PC-3 (cell line): ENCODE measurements at regions of chr10 and their contacts with region 1.

Region 1: GRCh38 chr10:57579926-57580325 is 687.8 kb downstream of the IPMK start:
- DNase-seq: peak; percentile 78
- ATAC-seq: peak; percentile 98
- H3K4me3 ChIP-seq: no peak overlapping the region
- H3K27ac ChIP-seq: no peak overlapping the region
- H3K4me1 ChIP-seq: no peaks in the 10 kb centered on the region
- H3K27me3 ChIP-seq: no peaks in the 10 kb centered on the region
- CTCF ChIP-seq: peak; percentile 90

Region 2: GRCh38 chr10:55943403-55943802 is 1636.5 kb before region 1 on chr10:
- CTCF ChIA-PET with region 1: no interaction called
- POLR2A ChIA-PET with region 1: interaction called, 11 read pairs
- intact Hi-C with region 1: no loop called
- DNase-seq: no peak
- ATAC-seq: no peak
- H3K4me3 ChIP-seq: no peak overlapping the region
- H3K27ac ChIP-seq: no peak overlapping the region
- H3K4me1 ChIP-seq: no peaks in the 10 kb centered on the region
- H3K27me3 ChIP-seq: no peaks in the 10 kb centered on the region
- CTCF ChIP-seq: no peak

Region 3: GRCh38 chr10:57303567-57303966 is 276.4 kb before region 1 on chr10:
- CTCF ChIA-PET with region 1: no interaction called
- POLR2A ChIA-PET with region 1: no interaction called
- intact Hi-C with region 1: no loop called
- DNase-seq: no peak
- ATAC-seq: no peak
- H3K4me3 ChIP-seq: no peak overlapping the region
- H3K27ac ChIP-seq: no peak overlapping the region
- H3K4me1 ChIP-seq: no peaks in the 10 kb centered on the region
- H3K27me3 ChIP-seq: no peaks in the 10 kb centered on the region
- CTCF ChIP-seq: no peak

Region 4: GRCh38 chr10:57657164-57657765 is 77.3 kb after region 1 on chr10:
- CTCF ChIA-PET with region 1: interaction called, 7 read pairs
- POLR2A ChIA-PET with region 1: interaction called, 3 read pairs
- intact Hi-C with region 1: loop called (anchors 1 kb)
- DNase-seq: peak; percentile 89
- ATAC-seq: peak; percentile 95
- H3K4me3 ChIP-seq: no peak overlapping the region
- H3K27ac ChIP-seq: no peak overlapping the region
- H3K4me1 ChIP-seq: no peaks in the 10 kb centered on the region
- H3K27me3 ChIP-seq: no peaks in the 10 kb centered on the region
- CTCF ChIP-seq: peak; percentile 93

Region 5: GRCh38 chr10:57716886-57717285 is 137.0 kb after region 1 on chr10:
- CTCF ChIA-PET with region 1: no interaction called
- POLR2A ChIA-PET with region 1: no interaction called
- intact Hi-C with region 1: loop called (anchors 1 kb)
- DNase-seq: peak; percentile 78
- ATAC-seq: peak; percentile 84
- H3K4me3 ChIP-seq: no peak overlapping the region
- H3K27ac ChIP-seq: no peak overlapping the region
- H3K4me1 ChIP-seq: no peaks in the 10 kb centered on the region
- H3K27me3 ChIP-seq: no peaks in the 10 kb centered on the region
- CTCF ChIP-seq: peak; percentile 86